Vagina (tissue), 2 donors: ENCODE measurements at regions of chr5 and their contacts with region 1.

Region 1: DNA sequence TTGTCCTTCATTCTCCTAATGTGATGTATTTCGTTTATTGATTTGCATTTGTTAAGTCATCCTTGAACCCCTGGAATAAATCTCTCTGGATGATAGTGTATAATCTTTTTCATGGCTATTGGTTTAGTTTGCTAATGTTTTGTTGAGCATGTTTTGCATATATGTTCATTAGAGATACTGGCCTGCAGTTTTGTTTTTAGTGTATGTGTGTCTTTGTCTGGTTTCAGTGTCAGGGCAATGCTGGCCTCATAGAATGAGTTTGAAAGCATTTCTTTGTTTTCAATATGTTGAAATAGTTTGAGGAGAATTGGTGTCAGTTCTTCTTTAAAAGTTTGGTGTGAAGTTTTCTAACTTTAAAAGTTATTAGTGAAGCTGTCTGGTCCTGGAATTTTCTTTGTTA is 149.6 kb upstream of the ATP10B start:
- DNase-seq: no peak
- H3K4me3 ChIP-seq: no peak overlapping the region
- H3K27ac ChIP-seq: no peak overlapping the region
- H3K4me1 ChIP-seq: no peaks in the 10 kb centered on the region
- H3K27me3 ChIP-seq: no peaks in the 10 kb centered on the region
- CTCF ChIP-seq: no peak
- POLR2A ChIP-seq: no peak

Region 2: DNA sequence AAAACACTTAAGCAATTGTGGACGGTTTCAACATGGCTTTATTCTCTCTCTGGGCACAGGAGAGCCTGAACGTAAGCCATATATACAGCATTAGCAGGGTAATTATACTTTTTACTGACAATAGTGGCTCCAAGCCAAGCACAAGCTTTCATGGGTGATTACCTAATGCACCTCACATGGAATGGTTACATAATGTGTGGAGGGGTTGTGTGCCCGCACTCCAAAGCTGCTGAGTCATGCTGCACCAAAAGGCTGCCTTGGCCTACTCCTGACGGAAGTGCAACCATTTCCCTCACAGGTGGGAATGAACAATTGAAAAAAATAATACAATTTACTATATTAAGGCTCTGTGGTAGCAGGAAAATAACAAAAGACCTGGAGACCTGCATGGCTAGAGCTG is 63.1 kb before region 1 on chr5:
- intact Hi-C with region 1: no loop called
- DNase-seq: no peak
- H3K4me3 ChIP-seq: no peak overlapping the region
- H3K27ac ChIP-seq: no peak overlapping the region
- H3K4me1 ChIP-seq: peaks cover 5% of the 10 kb centered on the region
- H3K27me3 ChIP-seq: no peaks in the 10 kb centered on the region
- CTCF ChIP-seq: no peak
- POLR2A ChIP-seq: no peak

Region 3: GRCh38 chr5:161051920-161052500 is 50.4 kb after region 1 on chr5:
- intact Hi-C with region 1: loop called (anchors 2 kb)
- DNase-seq: no peak
- H3K4me3 ChIP-seq: no peak overlapping the region
- H3K27ac ChIP-seq: no peak overlapping the region
- H3K4me1 ChIP-seq: no peaks in the 10 kb centered on the region
- H3K27me3 ChIP-seq: no peaks in the 10 kb centered on the region
- CTCF ChIP-seq: no peak
- POLR2A ChIP-seq: no peak

Region 4: GRCh38 chr5:162456081-162456480 is 1454.5 kb after region 1 on chr5:
- intact Hi-C with region 1: no loop called
- DNase-seq: no peak
- H3K4me3 ChIP-seq: no peak overlapping the region
- H3K27ac ChIP-seq: no peak overlapping the region
- H3K4me1 ChIP-seq: no peaks in the 10 kb centered on the region
- H3K27me3 ChIP-seq: no peaks in the 10 kb centered on the region
- CTCF ChIP-seq: no peak
- POLR2A ChIP-seq: no peak